Transverse colon (tissue), 4 donors: ENCODE measurements at regions of chr4 and their contacts with region 1.

Region 1: DNA sequence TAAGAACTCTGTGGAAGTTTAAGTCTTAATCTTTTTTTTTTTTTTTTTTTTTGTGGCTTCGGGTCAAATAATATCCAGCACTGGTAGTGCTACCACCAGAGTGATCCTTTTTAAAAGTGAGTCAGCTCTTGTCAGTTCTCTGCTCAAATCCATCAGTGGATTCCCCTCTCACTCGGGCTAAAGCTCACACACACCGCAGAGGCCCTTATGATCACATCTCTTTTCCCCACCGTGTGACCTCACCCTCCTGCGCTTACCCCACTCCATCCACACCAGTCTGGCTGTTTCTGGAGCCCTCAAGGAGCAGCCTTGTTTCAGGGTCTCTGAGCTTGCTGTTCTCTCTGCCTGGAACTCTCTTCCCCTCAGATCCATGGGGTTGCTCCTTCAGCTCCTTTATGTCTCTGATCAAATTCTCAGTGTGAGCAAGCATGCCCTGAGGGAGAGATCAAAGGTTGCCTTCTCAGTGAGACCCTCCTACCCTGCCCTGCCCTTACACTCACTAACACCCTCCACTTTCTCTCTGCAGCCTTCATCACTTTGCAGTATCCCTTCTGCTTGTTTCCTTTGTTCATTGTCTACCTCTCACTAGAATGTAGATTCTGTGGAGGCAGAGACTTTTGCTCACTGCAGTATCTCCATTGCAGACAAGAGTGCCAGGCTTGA is 19.8 kb upstream of the BEND4 start:
- DNase-seq: no peak
- H3K4me3 ChIP-seq: no peak overlapping the region
- H3K27ac ChIP-seq: no peak overlapping the region
- H3K4me1 ChIP-seq: no peaks in the 10 kb centered on the region
- H3K27me3 ChIP-seq: no peaks in the 10 kb centered on the region
- CTCF ChIP-seq: no peak
- EP300 ChIP-seq: no peak
- POLR2A ChIP-seq: no peak

Region 2: DNA sequence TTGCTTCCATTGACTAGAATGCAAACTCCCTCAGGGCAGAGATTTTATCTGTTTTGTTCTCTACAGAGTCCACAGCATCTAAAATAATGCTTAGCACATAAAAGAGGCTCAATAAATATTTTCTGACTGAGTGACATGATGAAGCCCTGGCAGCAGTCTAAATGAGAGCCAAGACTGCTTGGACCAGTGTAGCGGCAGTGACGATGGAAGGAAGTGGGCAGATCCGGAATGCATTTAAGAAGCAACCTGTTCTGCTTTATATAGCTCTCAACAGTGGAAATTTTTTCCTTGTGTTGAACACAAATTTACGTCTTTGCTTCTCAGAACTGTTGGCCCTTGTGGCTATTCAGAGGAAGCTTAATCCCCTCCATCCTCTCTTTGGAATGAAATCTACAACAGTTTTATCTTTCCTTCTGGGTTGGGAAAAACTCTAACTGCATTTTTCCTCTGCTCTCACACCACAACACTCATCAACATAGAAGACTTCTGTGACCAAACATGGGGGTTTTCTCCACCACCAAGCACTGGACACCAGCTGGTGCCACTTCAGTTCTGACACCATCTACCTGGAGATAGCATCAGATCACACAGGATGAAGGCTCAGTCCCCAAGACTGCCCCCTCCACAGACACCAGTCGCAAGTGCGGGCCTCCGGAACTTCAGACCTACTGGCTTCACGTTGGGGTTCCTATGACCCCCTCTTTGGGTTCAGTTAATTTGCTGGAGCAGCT is 12.8 kb before region 1 on chr4:
- in situ Hi-C with region 1: no loop called
- intact Hi-C with region 1: loop called (anchors 1 kb)
- DNase-seq: no peak
- H3K4me3 ChIP-seq: no peak overlapping the region
- H3K27ac ChIP-seq: no peak overlapping the region
- H3K4me1 ChIP-seq: no peaks in the 10 kb centered on the region
- H3K27me3 ChIP-seq: peaks cover 6% of the 10 kb centered on the region
- CTCF ChIP-seq: no peak
- EP300 ChIP-seq: no peak
- POLR2A ChIP-seq: no peak

Region 3: DNA sequence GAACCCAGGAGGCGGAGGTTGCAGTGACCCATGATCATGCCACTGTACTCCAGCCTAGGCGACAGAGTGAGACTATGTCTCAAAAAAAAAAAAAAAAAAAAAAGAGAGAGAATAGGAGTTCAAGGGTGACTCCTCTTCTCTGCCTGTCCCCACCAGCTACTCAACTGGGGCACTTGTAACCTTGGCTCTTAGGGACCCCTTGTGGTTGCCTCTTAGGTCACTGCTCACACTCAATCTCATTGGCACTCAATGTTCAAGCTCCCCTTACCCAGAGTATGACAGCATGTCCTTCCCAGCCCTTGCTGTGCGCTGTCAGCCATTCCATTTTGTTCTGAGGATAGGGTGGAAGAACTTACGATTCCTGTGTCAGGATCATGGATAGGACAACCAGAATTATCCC is 62.6 kb after region 1 on chr4:
- in situ Hi-C with region 1: no loop called
- intact Hi-C with region 1: no loop called
- DNase-seq: no peak
- H3K4me3 ChIP-seq: no peak overlapping the region
- H3K27ac ChIP-seq: no peak overlapping the region
- H3K4me1 ChIP-seq: no peaks in the 10 kb centered on the region
- H3K27me3 ChIP-seq: no peaks in the 10 kb centered on the region
- CTCF ChIP-seq: no peak
- EP300 ChIP-seq: no peak
- POLR2A ChIP-seq: no peak